CD14-positive monocyte (primary cell): ENCODE measurements at regions of chr6 and their contacts with region 1.

Region 1: DNA sequence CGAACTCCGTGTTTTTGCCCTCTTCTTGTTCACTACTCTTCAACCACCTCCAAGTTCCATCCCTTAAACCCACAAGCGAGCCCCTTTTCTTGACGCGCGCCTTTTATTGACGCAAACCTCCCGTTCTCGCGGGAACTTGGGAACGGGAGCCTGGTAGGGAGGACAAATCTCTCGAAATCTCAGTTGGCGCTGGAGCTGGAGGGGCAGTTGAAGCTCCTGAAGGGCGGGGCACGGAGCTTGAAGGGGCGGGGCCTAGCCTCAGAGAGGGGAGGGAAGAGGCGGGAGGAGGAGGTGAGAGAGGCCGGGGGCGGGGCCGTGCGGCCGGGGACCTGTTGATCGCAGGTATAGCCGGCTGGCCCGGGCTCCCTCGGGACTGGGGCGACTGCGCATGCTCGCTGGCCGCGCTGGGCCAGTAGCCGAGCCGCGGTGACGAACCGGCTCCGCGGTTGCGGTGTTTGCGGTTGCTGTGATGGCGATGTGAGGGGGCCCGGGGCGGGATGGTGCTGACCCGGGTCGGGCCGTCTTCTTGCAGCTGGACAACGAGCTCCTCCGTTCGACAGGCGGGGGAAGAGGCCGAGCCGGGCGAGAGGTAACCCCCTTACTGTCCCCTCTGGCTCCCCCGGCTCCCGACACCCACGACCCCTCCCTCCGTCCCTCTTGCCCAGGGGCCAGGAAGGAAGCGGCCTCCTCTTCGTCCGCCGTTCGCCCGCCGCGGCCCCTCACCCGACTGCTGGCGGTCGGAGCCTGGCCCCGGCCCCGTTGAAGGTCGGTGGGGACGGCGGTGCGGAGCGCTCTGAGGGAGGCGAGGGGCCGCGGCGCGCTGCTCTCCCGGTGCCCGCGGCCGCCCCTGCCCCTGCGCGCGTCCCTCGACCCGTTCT is at the start of gene FAM135A:
- DNase-seq: peak; percentile 85 to 89 (median 89)
- H3K4me3 ChIP-seq: peak within 1 kb of the TSS; percentile 64 to 88 (median 67)
- H3K4me3 Mint-ChIP-seq: peak within 1 kb of the TSS; percentile 100
- H3K27ac ChIP-seq: peak within 1 kb of the TSS; percentile 73 to 77
- H3K27ac Mint-ChIP-seq: peak within 1 kb of the TSS; percentile 86 to 96 (median 90)
- H3K4me1 ChIP-seq: peaks cover 21 to 23% of the 10 kb centered on the region in 2 donors
- H3K4me1 Mint-ChIP-seq: peaks cover 27% of the 10 kb centered on the region
- H3K27me3 ChIP-seq: no peaks in the 10 kb centered on the region
- H3K27me3 Mint-ChIP-seq: peaks cover 0 to 9% (median 2%) of the 10 kb centered on the region in 3 donors
- CTCF ChIP-seq: no peak
- polyA plus RNA-seq, gene FAM135A: 4.1 to 10.3 (median 5.4) TPM

Region 2: DNA sequence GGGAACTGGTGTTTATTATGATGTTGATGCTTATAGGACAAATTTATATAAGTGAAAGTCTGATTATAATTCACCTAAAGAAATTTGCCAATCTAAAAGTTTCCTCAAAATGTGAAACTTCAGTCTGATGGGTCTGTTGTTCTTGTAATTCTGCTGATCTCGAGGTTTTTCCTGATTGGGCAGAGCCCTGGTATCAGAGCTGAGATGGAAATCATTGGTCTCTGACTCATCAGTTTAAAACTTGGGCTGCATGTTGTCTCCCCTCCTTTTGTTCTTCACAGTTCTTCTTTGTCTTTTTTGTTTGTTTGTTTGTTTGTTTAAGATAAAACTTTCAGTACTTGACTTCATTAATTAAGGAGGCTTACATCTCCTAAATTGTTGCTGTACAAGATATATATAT is 260.2 kb after region 1 on chr6:
- intact Hi-C with region 1: loop called in 1 of 2 experiments (anchors 10 kb)
- DNase-seq: no peak
- H3K4me3 ChIP-seq: no peak overlapping the region
- H3K4me3 Mint-ChIP-seq: no peak overlapping the region
- H3K27ac ChIP-seq: no peak overlapping the region
- H3K27ac Mint-ChIP-seq: no peak overlapping the region
- H3K4me1 ChIP-seq: peaks cover 9 to 10% of the 10 kb centered on the region in 2 donors
- H3K4me1 Mint-ChIP-seq: peaks cover 33% of the 10 kb centered on the region
- H3K27me3 ChIP-seq: no peaks in the 10 kb centered on the region
- H3K27me3 Mint-ChIP-seq: peaks cover 0 to 1% (median 0%) of the 10 kb centered on the region in 3 donors
- CTCF ChIP-seq: no peak